ENCODE measurements at regions of chr3 and their contacts with region 1.

Region 1: DNA sequence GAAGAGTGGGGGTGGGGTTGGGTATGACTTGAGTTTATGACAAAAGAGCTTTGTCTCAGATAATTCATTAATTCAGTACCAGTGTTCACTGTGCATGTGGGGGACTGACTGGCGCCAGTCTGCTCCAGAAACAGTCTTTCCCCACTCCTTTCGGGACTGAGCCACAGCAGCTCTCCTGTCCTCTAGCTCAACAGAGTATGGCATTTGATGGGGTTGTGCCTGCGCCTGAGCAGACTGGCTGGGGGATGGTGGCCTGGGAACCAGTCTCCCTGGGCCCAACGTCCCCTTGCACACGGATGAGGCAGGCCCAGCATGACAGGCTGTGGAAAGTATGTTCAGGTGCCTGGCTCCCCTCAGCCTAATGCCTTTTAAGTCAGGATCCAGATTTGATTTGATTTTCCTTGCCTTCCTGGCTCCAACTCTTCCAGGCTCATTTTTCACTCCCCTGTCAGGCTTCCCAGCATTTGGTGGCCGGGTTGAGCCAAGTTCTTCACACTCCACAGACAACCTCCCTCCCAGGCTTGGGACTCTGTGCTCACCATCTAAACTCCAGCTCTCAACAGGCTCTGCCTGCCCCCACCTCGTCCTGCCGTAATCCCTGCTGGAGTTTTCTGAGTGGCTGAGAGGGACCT is 105.0 kb downstream of the MYLK start:
- DNase-seq: no peak

Region 2: DNA sequence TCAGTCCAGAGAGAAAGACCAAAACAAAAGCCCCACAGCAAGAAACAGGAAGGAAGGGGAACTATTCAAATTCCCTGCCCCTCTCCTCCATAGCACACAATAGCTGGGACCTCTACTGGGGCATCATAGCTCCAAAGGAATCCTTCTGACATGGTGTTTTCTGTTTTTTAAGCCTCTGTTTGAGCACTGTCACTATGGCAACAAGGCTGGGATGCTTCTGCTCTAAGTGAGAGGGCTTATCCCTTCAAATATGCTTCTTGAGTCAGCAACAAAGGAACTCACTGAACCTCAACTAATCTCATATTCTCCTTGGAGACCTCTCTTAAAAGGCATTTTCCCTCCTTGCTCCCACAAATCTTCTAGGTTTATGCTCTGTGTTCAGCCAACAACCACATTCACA is 64.6 kb after region 1 on chr3:
- intact Hi-C with region 1: loop called in 1 of 2 experiments (anchors 2 kb)
- DNase-seq: no peak

Region 3: DNA sequence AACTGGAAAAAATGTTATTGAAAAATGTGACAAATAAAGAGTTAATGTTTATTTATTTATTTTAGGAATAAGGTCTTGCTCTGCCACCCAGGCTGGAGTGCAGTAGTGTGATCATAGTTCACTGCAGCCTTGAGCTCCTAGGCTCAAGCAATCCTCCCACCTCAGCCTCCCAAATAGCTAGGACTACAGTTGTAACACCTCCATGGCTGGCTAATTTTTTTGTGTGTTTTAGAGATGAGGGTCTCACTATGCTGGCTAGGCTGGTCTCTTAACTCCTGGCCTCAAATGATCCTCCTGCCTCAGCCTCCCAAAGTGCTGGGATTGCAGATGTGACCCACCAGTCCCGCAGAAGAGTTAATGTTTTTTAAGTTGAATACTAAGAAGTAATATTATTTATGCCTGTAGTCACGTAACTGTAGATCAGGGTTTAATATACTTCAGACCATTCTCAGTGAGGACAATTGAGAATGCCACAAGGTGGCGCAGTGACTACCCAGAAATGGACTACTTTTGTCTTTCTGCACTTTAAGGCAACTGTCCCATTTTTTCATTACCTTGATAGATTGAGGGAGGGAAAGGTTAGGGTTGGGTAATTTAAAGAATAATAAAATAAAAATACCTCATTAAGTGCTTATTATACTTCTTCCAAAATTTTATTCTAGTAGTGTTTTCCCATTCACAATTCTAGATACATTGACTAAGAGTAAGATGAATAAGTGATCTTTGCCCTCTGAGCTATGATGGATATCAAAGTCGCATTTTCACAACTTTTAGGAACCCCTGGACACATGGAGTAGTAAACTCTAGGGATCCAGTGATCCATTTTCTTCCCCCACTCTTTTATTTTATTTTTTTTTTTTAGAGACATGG is 1149.5 kb after region 1 on chr3:
- intact Hi-C with region 1: no loop called
- DNase-seq: no peak